ENCODE measurements at regions of chr11 and their contacts with region 1.

Region 1: DNA sequence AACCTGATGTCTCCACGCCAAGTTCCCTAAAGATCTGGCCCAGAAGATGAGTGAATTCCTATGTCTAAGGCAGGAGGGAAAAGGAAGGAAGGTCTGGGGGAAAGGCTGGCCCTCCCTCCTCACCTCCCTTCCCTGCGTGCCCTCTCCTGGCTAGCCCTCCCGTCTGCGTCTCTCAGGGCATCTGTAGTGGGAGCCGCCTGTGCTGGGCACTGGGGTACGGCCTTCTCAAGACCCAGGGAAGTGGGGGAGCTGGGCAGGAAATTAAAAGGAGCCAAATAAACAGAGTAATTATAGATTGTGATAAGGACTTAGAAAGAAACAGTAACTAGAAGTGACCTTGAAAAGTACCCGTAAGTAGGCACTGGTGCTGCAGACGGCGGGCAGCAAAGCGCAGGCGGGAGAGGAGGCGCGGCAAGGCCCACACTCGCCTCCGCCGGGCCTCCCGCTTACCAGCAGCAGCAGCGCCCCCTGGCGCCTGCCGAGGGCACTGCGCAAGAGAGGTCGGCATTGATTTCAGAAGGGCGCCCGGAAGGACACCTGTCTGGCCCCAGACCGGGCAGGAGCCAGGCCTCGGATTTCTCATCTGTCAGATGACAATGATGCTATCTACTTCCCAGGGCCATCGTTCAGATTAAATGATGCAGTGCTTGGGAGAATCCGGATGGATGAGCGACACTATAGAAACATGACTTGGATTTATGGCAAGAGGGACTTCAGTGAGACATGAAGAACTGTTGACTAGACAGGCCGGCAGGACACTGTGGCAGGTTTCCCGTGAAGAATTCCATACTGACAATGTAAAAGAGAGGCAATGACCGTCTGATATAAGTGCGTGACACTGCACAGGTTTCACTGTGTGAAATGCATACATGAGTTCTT is 7.3 kb downstream of the KCNJ1 start:
- DNase-seq: peak; percentile 78
- ATAC-seq: peak; percentile 81 to 87

Region 2: GRCh38 chr11:128039140-128040021 is 820.4 kb before region 1 on chr11:
- intact Hi-C with region 1: loop called in 1 of 2 experiments (anchors 10 kb)
- DNase-seq: peak; percentile 33
- ATAC-seq: peak; percentile 81 to 93

Region 3: GRCh38 chr11:128164080-128164741 is 695.6 kb before region 1 on chr11:
- intact Hi-C with region 1: loop called in 1 of 2 experiments (anchors 10 kb)
- DNase-seq: no peak
- ATAC-seq: no peak

Region 4: DNA sequence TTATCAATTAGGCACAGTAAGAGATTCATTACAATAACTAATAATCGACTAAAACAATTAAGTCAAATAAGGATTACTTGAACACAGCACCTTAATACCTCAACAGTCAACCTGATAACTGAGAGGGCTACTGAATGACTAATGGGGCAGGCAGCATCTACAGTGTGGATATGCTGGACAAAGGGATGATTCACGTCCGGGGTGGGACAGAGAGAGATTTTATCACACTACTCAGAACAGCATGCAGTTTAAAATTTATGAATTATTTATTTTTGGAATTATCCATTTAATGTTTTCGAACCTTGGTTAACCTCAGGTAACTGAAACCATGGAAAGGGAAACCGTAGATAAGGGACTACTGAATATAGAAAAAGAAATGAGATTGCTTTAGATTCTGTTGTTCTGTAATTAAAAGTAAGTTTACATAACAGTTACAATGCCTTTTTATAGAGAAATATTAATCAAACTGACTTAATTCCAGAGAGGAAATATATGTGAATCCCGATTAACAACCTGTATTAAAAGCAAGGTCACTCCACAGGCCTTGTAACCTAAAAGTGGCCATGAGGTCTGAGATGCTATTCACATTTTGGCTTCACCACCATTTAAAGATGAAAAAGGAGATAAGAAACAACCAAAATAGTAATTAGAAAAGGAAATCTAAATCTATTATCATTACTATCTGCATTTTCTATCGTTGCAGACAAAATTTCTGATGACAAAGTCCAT is 201.8 kb after region 1 on chr11:
- intact Hi-C with region 1: no loop called
- DNase-seq: no peak
- ATAC-seq: no peak

Region 5: DNA sequence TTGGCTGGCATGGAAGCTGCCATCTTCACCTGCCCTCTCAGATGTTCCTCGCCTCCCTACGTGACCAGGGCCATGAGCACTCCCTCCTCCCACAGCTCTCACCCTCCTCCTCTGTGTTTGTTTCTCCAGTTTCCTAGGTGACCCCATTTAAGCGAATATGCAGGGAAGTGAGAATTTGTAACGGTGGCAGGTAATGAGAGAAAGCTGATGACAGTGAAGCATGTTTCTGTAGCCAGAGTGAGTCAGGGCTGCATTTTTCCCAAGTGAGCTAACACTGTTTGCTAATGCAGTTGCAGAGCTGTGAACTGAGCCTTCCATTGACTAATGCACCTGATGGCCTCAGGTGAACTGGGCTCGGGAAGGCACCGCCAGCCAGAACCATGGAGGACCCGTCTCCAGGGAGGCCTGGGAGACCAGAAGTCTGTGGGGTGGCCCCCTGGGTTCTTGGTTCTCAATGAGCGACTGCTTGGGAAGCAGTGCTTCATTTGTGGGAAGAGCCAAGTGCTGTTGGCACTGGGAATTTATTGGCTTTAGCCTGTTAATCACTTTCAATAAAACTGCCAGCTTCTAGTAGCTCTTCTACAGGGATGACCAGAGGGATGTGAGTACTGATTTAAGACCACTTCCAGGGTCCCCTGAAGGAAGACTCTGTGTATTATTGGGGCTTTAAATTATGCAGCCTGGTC is 580.4 kb after region 1 on chr11:
- intact Hi-C with region 1: no loop called
- DNase-seq: no peak
- ATAC-seq: peak; percentile 50 to 91